Activated B cell treated with CpG ODN at 0.5 μM for 24 hours (primary cell): ENCODE measurements at regions of chr17 and their contacts with region 1.

Region 1: GRCh38 chr17:76304226-76305134 is 3.6 kb downstream of the QRICH2 start:
- DNase-seq: no peak
- ATAC-seq: no peak
- H3K4me3 Mint-ChIP-seq: no peak overlapping the region
- H3K27ac Mint-ChIP-seq: no peak overlapping the region
- H3K4me1 Mint-ChIP-seq: peaks cover 3% of the 10 kb centered on the region
- H3K27me3 Mint-ChIP-seq: no peaks in the 10 kb centered on the region
- CTCF ChIP-seq: no peak

Region 2: DNA sequence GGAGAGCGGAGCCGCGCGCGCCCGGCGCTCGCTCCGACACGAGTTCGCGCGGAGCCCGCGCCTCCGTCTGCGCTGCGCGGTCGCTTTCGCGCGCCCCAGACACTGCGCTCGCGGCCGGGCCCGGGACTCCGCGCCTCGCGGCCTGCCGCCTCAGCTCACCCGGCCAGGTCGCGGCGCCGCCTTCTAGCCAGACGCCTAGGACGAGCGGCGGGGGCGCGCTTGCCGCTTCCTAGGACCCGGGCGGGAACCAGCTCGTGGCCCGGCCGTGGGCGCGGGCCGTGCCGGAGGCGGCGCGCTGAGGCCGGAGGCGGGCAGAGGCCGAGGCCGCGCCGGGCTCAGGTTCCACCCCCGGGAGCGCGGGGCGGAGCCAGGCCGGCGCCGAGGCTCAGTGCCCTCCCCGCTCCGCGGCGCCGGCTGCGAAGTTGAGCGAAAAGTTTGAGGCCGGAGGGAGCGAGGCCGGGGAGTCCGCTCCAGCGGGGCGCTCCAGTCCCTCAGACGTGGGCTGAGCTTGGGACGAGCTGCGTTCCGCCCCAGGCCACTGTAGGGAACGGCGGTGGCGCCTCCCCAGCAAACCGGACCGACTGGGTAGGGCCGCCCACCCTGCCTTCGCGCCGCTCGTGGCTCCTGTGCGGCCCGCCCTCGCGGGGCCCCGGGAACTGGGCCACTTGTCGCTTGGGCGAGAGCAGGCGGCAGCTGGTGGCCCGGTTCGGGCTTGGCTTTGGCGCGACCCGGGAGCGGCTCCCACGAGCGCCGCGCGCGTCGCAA is 79.9 kb after region 1 on chr17 and contains the start of gene SPHK1:
- CTCF ChIA-PET with region 1: interaction called, 13 read pairs
- POLR2A ChIA-PET with region 1: no interaction called
- intact Hi-C with region 1: no loop called
- DNase-seq: peak; percentile 77
- ATAC-seq: peak; percentile 75
- H3K4me3 Mint-ChIP-seq: peak within 1 kb of the TSS; percentile 86
- H3K27ac Mint-ChIP-seq: peak within 1 kb of the TSS; percentile 71
- H3K4me1 Mint-ChIP-seq: peaks cover 15% of the 10 kb centered on the region
- H3K27me3 Mint-ChIP-seq: peaks cover 2% of the 10 kb centered on the region
- CTCF ChIP-seq: no peak
- total RNA-seq, gene SPHK1: 1.1 and 1.3 TPM in 2 replicates

Region 3: GRCh38 chr17:76458580-76459490 is 154.4 kb after region 1 on chr17:
- CTCF ChIA-PET with region 1: interaction called, 6 read pairs
- POLR2A ChIA-PET with region 1: no interaction called
- intact Hi-C with region 1: loop called (anchors 2 kb)
- DNase-seq: no peak
- ATAC-seq: peak; percentile 79
- H3K4me3 Mint-ChIP-seq: no peak overlapping the region
- H3K27ac Mint-ChIP-seq: no peak overlapping the region
- H3K4me1 Mint-ChIP-seq: no peaks in the 10 kb centered on the region
- H3K27me3 Mint-ChIP-seq: no peaks in the 10 kb centered on the region
- CTCF ChIP-seq: no peak

Region 4: DNA sequence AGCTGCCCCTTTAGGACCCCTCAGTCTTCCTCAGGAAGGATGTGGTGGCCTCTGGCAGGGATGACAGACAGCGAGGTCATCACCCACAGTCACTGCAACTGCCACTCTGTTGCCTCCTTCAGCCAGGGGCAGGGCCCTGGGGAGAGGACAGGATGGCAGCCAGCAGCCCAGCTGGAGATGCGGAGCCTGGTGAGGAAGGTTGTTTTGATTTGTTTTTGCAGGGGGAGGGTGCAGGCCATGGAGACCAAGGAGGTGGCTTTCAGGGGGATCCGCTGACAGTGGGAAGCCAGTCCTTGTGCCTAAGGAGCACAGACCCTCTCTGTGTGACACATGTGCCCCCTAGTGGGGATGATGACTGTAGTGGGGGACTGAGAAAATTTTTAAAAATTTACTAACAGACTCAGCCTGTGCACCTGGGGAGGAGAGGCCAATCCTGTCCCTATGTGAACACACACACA is 242.7 kb after region 1 on chr17:
- CTCF ChIA-PET with region 1: no interaction called
- POLR2A ChIA-PET with region 1: interaction called, 3 read pairs
- intact Hi-C with region 1: loop called (anchors 1 kb)
- DNase-seq: no peak
- ATAC-seq: peak; percentile 94
- H3K4me3 Mint-ChIP-seq: no peak overlapping the region
- H3K27ac Mint-ChIP-seq: no peak overlapping the region
- H3K4me1 Mint-ChIP-seq: peaks cover 5% of the 10 kb centered on the region
- H3K27me3 Mint-ChIP-seq: peaks cover 8% of the 10 kb centered on the region
- CTCF ChIP-seq: no peak